Left colon (tissue), 2 donors: ENCODE measurements at regions of chr16 and their contacts with region 1.

Region 1: DNA sequence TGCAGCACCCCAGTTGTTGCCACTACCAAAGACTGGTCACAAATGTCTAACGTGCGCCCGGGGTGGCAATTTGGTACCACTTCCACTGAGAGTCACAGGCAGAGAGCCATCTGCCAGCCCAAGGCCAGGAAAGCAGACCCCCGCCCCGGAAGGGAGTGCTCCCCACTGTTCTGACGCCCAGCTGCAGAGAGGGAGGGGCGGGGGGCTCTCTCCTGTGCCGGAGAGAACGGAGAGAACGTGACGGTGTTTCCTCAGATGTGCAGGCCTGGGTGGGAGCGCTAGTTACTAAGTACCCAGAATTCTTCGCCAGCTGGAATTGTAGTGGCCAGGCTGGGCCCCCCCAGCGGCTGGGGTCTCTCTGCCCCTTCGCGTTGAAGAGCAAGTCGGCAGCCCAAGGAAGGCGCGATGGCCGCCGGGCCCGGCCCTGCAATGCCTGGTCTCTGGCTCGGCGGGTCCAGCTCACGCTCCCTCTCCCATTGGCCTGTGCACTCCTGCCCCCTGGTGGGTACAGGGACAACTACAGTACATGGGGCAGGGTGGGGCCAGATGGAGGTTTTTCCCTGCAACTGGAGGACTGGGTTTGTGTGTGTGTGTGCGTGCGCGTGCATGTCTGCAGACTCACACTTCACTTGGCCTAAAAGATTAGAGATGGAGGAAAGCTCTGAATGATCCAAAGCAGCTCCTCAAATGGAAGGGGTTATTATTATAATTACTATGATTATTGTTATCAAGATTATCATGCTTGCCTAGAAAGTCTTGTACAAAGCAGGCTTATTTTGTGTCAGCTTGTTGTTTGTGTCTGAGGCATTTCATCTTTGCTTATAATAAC is 107.1 kb downstream of the AMFR start:
- DNase-seq: peak; percentile 61 to 77
- ATAC-seq: peak; percentile 98

Region 2: GRCh38 chr16:55944377-55944802 is 373.8 kb before region 1 on chr16:
- intact Hi-C with region 1: loop called (anchors 2 to 10 kb)
- DNase-seq: peak; percentile 38 to 45
- ATAC-seq: peak; percentile 52

Region 3: GRCh38 chr16:56041686-56042085 is 276.5 kb before region 1 on chr16:
- intact Hi-C with region 1: loop called in 1 of 2 experiments (anchors 10 kb)
- DNase-seq: peak in 1 of 2 donors; percentile 6
- ATAC-seq: peak; percentile 52

Region 4: GRCh38 chr16:56269811-56270684 is 48.2 kb before region 1 on chr16:
- intact Hi-C with region 1: no loop called
- DNase-seq: peak in 1 of 2 donors; percentile 63
- ATAC-seq: peak; percentile 26

Region 5: GRCh38 chr16:56401482-56401881 is 83.3 kb after region 1 on chr16:
- intact Hi-C with region 1: no loop called
- DNase-seq: no peak
- ATAC-seq: peak; percentile 92